ENCODE measurements at regions of chr16 and their contacts with region 1.

Region 1: DNA sequence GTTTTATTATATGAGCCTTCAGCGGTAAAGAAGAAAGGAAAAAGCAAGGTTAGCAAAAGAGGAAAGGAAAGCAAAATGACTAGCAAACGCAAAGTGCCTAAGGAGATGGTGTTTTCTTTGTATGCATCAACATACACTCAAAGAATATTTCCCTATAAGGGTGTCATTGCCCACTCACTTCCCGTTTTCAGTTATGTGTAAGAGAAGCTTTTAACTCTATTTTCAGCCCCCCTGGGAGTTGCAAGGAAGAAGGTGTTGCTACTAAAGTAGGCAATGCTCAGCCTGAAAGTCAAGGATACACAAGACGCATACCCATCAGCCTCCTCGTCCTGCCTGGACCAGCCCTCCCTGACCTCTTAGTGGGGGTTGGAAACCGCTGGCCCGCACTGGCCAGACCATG is 267.7 kb upstream of the ZFHX3 start:
- DNase-seq: no peak
- H3K4me3 ChIP-seq: no peak overlapping the region
- H3K27ac ChIP-seq: no peak overlapping the region
- H3K4me1 ChIP-seq: peaks cover 6 to 8% of the 10 kb centered on the region in 2 donors
- H3K27me3 ChIP-seq: no peaks in the 10 kb centered on the region
- CTCF ChIP-seq: no peak
- POLR2A ChIP-seq: no peak

Region 2: GRCh38 chr16:72894293-72895151 is 421.1 kb before region 1 on chr16:
- intact Hi-C with region 1: no loop called
- DNase-seq: peak; percentile 89 to 90
- H3K4me3 ChIP-seq: no peak overlapping the region
- H3K27ac ChIP-seq: peak overlapping the region; percentile 78 to 91 (median 88)
- H3K4me1 ChIP-seq: peaks cover 18 to 30% of the 10 kb centered on the region in 2 donors
- H3K27me3 ChIP-seq: no peaks in the 10 kb centered on the region
- CTCF ChIP-seq: no peak
- POLR2A ChIP-seq: no peak

Region 3: DNA sequence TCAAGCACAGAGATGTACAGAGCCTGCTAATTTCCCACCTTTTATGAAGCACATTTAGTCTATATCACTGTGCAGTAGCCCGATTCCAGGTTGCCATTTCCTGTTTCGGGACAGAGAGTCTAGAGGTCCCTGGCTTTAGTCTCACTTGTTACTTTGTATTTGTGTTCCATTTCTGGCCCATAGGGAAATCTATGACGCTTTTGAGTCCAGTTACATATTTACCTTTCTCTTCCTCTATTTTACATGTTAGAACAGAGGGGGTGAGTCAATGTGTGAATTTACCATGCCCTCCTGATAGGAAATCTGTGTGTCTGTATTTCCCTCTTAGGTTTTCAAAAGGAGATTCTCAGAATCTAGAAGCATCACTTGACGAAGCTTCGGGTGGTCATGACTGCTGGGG is 40.6 kb before region 1 on chr16:
- intact Hi-C with region 1: no loop called
- DNase-seq: no peak
- H3K4me3 ChIP-seq: no peak overlapping the region
- H3K27ac ChIP-seq: no peak overlapping the region
- H3K4me1 ChIP-seq: no peaks in the 10 kb centered on the region
- H3K27me3 ChIP-seq: no peaks in the 10 kb centered on the region
- CTCF ChIP-seq: no peak
- POLR2A ChIP-seq: no peak

Region 4: GRCh38 chr16:73365016-73365551 is 49.4 kb after region 1 on chr16:
- intact Hi-C with region 1: loop called (anchors 5 kb)
- DNase-seq: peak; percentile 77 to 80
- H3K4me3 ChIP-seq: no peak overlapping the region
- H3K27ac ChIP-seq: peak overlapping the region in 1 of 3 donors; percentile 3
- H3K4me1 ChIP-seq: peaks cover 0 to 14% of the 10 kb centered on the region in 2 donors
- H3K27me3 ChIP-seq: no peaks in the 10 kb centered on the region
- CTCF ChIP-seq: no peak
- POLR2A ChIP-seq: no peak